H1 (cell line): ENCODE measurements at regions of chr5 and their contacts with region 1.

Region 1: DNA sequence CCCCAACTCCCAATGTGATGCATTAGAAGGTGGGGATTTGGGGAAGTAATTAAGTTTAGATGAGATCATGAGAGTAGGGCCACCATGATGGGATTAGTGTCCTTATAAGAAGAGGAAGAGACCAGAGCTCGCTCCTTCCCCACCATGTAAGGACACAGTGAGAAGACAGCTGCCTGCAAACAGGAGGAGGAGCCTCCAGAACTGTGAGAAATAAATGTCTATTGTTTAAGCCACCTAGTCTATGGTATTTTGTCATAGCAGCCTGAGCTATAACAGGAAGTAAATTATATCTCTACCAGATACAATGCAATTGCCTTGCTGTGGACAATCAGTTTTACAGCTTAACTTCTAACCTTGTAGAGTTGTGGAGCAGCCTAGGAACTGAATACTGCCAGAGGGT is 58.0 kb downstream of the ANKRD33B start:
- DNase-seq: no peak
- H3K4me3 ChIP-seq: no peak overlapping the region
- H3K27ac ChIP-seq: no peak overlapping the region
- H3K4me1 ChIP-seq: peaks cover 0 to under 1% (median 0%) of the 10 kb centered on the region in 4 experiments; a peak in 2 of 7 replicates
- H3K27me3 ChIP-seq: no peaks in the 10 kb centered on the region
- CTCF ChIP-seq: no peak
- EP300 ChIP-seq: no peak
- POLR2A ChIP-seq: no peak
- RAD21 ChIP-seq: no peak

Region 2: GRCh38 chr5:10307206-10308148 is 314.4 kb before region 1 on chr5 and contains the start of gene CMBL:
- CTCF ChIA-PET with region 1: no interaction called
- POLR2A ChIA-PET with region 1: no interaction called
- DNase-seq: peak in 1 of 2 experiments; percentile 74
- H3K4me3 ChIP-seq: peak within 1 kb of the TSS; percentile 80 to 97 (median 88)
- H3K27ac ChIP-seq: no peak within 1 kb of the TSS
- H3K4me1 ChIP-seq: peaks cover 0 to 6% (median 4%) of the 10 kb centered on the region in 4 experiments; a peak in 5 of 7 replicates
- H3K27me3 ChIP-seq: peaks cover 0 to 2% (median 0%) of the 10 kb centered on the region in 4 experiments; a peak in 1 of 7 replicates
- CTCF ChIP-seq: no peak
- EP300 ChIP-seq: no peak
- POLR2A ChIP-seq: no peak
- RAD21 ChIP-seq: no peak
- total RNA-seq, gene CMBL: 27.9 and 30.9 TPM in 2 replicates

Region 3: DNA sequence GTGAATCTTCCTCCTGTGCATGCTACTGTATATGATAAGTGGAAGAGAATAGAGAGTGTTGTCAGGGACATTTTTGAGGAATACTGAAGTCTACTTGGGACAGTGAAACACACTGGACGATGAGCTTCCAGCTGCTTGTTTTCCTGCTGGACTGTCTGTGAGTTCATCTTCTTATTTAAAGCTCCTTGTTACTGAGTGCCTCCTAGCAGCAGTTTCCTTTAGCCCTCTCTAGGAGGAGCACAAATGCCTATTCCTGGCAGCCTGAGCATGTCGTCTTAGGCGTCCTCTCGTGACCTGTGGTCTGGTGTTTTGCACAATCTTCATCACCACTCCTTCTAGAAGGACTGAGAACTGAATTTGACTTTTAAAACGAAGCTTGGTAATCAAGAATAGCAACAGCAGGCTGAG is 14.2 kb before region 1 on chr5:
- CTCF ChIA-PET with region 1: interaction called, 53 read pairs
- POLR2A ChIA-PET with region 1: interaction called, 7 read pairs
- DNase-seq: no peak
- H3K4me3 ChIP-seq: no peak overlapping the region; a peak in 1 of 8 replicates
- H3K27ac ChIP-seq: no peak overlapping the region
- H3K4me1 ChIP-seq: peaks cover 4 to 31% (median 15%) of the 10 kb centered on the region in 4 experiments; a peak in 6 of 7 replicates
- H3K27me3 ChIP-seq: no peaks in the 10 kb centered on the region
- CTCF ChIP-seq: peak in 2 of 3 experiments; percentile 7 to 35; a peak in 2 of 4 replicates
- EP300 ChIP-seq: no peak
- POLR2A ChIP-seq: no peak
- RAD21 ChIP-seq: peak in 1 of 2 experiments; percentile 37; a peak in 3 of 4 replicates